ENCODE measurements at regions of chr1 and their contacts with region 1.

Region 1: DNA sequence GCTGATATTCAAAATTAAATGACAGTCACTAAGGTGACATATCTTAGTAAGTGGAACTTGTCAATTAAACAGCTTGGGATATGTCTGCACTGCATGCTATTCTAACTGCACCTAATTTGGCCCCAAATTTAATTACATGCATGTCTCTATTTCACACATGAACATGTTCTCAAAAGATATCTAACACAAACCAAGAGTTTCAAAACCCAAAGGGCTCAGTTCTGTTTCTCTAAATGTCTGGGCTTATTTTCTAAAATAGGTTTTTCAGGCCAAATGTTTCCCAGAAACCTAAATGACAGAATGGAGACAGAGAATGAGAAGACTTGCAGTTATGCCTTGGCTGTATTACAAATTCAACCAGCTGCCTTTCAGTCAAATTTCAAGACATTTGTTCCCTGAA is 11.3 kb downstream of the RAB29 start:
- DNase-seq: no peak
- H3K4me3 ChIP-seq: no peak overlapping the region
- H3K27ac ChIP-seq: no peak overlapping the region
- H3K4me1 ChIP-seq: no peaks in the 10 kb centered on the region
- H3K27me3 ChIP-seq: no peaks in the 10 kb centered on the region
- CTCF ChIP-seq: no peak
- POLR2A ChIP-seq: no peak

Region 2: DNA sequence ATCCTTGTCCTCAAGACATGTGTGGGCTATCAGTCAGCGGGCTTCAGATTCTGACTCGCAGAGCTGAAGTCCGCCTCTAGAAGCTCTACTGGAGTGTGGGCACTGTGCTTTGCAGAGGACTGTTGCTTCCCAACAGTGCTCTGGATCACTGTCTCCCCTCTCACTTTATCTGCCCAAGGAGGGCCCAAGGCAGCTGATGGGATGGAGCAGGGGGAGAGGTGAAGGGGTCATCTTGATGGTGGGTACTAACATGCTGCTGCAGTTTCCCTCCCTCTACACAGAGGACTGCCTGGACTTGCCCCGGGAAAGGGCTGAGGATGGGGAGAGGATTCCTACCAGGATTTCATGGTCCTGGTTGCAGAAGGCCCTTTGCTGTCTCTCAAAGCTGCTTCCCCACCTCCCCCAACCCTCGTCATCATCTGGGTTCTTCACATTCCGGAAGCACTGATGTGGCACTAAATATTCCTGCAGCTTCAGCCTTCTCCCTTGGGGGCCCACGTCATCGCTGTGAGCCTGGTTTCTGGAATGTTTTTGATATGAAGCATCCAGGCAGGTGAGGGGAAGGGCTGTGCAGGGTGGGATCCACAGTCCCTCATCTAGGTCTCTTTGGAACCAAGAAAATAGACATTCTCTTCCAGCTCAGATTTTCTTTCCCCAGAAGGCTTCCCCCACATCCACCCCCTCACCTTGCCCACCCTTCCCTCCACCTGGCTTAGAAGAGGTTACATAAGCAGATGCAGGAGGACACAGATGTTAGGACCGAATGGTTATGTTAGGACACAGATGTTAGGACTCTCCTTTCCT is 465.6 kb before region 1 on chr1:
- intact Hi-C with region 1: loop called (anchors 5 kb)
- DNase-seq: no peak
- H3K4me3 ChIP-seq: no peak overlapping the region
- H3K27ac ChIP-seq: no peak overlapping the region
- H3K4me1 ChIP-seq: no peaks in the 10 kb centered on the region
- H3K27me3 ChIP-seq: no peaks in the 10 kb centered on the region
- CTCF ChIP-seq: no peak
- POLR2A ChIP-seq: no peak

Region 3: DNA sequence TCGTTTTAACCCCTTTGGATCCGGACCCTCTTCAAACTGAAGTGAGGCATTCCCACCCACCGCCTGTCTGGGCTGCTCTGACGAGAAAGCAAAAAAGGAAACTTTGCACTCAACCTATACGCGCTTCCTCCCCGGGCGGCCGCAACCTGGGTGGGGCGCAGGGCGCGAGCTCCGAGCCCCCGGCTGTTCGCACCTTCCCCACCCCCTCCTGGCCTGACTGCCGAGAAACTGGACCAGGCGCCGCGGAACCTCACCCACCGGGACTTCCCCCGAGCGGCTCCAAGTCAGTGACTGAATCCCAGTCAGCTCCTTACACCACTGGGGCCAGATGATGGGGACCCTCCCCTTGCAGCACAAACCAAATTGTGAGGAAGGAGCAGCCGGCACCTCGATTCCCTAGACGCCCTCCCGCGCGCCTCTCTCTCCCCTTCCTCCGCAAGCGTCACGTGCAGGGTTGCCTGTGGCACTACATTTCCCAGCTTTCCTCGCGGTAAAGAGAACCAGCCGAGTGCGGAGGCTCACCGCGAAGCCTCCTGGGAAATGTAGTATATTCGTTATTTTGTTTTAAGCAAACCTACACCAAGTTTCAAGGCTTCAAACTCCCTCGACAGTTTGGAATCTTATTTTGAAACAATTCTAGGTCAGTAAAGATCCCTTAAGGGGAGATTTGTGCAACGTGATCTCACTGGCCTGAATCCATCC is 11.2 kb after region 1 on chr1 and contains the start of gene RAB29:
- intact Hi-C with region 1: no loop called
- DNase-seq: peak; percentile 72
- H3K4me3 ChIP-seq: peak within 1 kb of the TSS; percentile 83 to 90 (median 89)
- H3K27ac ChIP-seq: peak within 1 kb of the TSS; percentile 70 to 71
- H3K4me1 ChIP-seq: no peaks in the 10 kb centered on the region
- H3K27me3 ChIP-seq: no peaks in the 10 kb centered on the region
- CTCF ChIP-seq: no peak
- POLR2A ChIP-seq: no peak
- total RNA-seq, gene RAB29: 22.4 to 30.3 (median 23.9) TPM